Activated B cell treated with CpG ODN at 0.5 μM for 24 hours (primary cell): ENCODE measurements at regions of chr6 and their contacts with region 1.

Region 1: GRCh38 chr6:139375232-139376016 is 976 bp upstream of the CITED2 start:
- DNase-seq: peak; percentile 81
- ATAC-seq: peak; percentile 51
- H3K4me3 Mint-ChIP-seq: peak overlapping the region; percentile 99
- H3K27ac Mint-ChIP-seq: peak overlapping the region; percentile 95
- H3K4me1 Mint-ChIP-seq: peaks cover 27% of the 10 kb centered on the region
- H3K27me3 Mint-ChIP-seq: no peaks in the 10 kb centered on the region
- CTCF ChIP-seq: no peak

Region 2: GRCh38 chr6:138403801-138404661 is 971.4 kb before region 1 on chr6 and contains the start of gene HEBP2:
- CTCF ChIA-PET with region 1: no interaction called
- POLR2A ChIA-PET with region 1: interaction called, 10 read pairs
- intact Hi-C with region 1: loop called (anchors 2 kb)
- DNase-seq: peak; percentile 88
- ATAC-seq: peak; percentile 87
- H3K4me3 Mint-ChIP-seq: peak within 1 kb of the TSS; percentile 90
- H3K27ac Mint-ChIP-seq: peak within 1 kb of the TSS; percentile 89
- H3K4me1 Mint-ChIP-seq: peaks cover 20% of the 10 kb centered on the region
- H3K27me3 Mint-ChIP-seq: no peaks in the 10 kb centered on the region
- CTCF ChIP-seq: no peak
- total RNA-seq, gene HEBP2: 26.2 and 32.7 TPM in 2 replicates

Region 3: DNA sequence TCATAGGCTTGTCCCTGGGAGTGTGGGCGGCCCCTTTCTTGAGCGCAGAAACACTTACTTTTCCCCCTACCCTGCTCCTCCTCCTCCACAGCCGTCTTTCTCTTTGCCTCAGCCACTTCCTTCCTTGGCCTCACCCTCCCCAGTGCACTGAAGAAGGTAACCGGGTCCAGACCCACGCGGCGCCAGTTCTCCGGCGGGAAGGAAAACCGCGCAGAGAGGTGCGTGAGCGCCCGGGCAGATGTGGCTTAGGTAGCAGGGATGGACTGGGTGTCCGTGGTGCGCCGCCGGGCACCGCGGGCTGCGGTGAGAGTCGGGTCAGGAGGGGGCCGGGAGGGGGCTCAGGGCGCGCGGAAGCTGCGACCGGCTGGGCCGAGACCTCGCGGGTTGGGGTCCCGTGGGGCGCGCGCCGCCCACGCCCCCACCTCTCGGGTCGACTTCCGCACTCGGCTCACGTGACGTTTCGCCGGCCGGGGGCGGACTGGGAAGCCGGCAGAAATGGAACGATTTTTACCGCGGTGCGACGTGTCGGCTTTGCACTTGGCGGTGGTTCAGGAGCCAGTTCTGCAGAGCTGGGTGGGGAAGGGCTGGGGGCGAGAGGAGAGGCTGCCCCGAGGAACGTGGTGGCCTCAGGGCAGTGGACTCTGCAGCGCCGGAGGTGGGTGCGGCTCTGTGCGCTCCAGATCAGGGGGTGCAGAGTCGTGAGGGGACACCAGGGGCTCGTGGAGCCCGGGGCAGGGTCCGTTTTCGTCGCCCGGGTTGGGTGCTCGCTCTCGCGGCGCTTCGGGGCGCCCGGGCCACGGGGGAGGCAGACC is 346.6 kb before region 1 on chr6 and contains the start of gene ABRACL:
- CTCF ChIA-PET with region 1: no interaction called
- POLR2A ChIA-PET with region 1: interaction called, 42 read pairs
- intact Hi-C with region 1: loop called (anchors 1 kb)
- DNase-seq: peak; percentile 83
- ATAC-seq: peak; percentile 71
- H3K4me3 Mint-ChIP-seq: no peak within 1 kb of the TSS
- H3K27ac Mint-ChIP-seq: peak within 1 kb of the TSS; percentile 95
- H3K4me1 Mint-ChIP-seq: peaks cover 14% of the 10 kb centered on the region
- H3K27me3 Mint-ChIP-seq: no peaks in the 10 kb centered on the region
- CTCF ChIP-seq: no peak
- total RNA-seq, gene ABRACL: 63.5 and 63.8 TPM in 2 replicates

Region 4: DNA sequence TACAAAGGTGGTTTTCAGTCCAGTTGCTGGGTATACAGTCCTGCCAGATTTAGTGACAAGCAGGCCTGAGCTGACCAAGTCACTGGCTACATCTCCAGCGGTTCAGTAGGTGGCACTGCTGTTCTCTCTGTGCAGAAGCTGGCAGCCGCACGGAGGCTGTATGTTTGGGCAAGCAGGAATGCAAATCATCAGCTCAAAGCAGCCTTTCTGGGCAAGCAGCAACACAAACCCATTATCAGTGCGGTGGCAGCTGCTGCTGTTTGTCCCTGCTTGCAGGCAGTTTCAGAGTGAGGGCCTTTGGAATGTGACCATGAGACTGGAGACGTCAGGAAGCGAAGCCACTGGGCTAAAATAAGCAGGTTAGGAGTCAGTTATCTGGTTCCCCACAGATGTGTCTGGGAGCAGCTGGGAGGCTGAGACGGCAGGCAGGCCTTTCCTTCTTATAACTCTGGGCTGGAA is 156.1 kb before region 1 on chr6:
- CTCF ChIA-PET with region 1: interaction called, 40 read pairs
- POLR2A ChIA-PET with region 1: interaction called, 13 read pairs
- intact Hi-C with region 1: no loop called
- DNase-seq: peak; percentile 52
- ATAC-seq: peak; percentile 100
- H3K4me3 Mint-ChIP-seq: peak overlapping the region; percentile 24
- H3K27ac Mint-ChIP-seq: peak overlapping the region; percentile 73
- H3K4me1 Mint-ChIP-seq: peaks cover 12% of the 10 kb centered on the region
- H3K27me3 Mint-ChIP-seq: no peaks in the 10 kb centered on the region
- CTCF ChIP-seq: no peak

Region 5: GRCh38 chr6:139364302-139364981 is 11.0 kb before region 1 on chr6:
- CTCF ChIA-PET with region 1: interaction called, 23 read pairs
- POLR2A ChIA-PET with region 1: interaction called, 13 read pairs
- intact Hi-C with region 1: no loop called
- DNase-seq: no peak
- ATAC-seq: peak; percentile 67
- H3K4me3 Mint-ChIP-seq: peak overlapping the region; percentile 9
- H3K27ac Mint-ChIP-seq: no peak overlapping the region
- H3K4me1 Mint-ChIP-seq: peaks cover 20% of the 10 kb centered on the region
- H3K27me3 Mint-ChIP-seq: no peaks in the 10 kb centered on the region
- CTCF ChIP-seq: peak; percentile 67

Region 6: GRCh38 chr6:139841794-139842215 is 466.4 kb after region 1 on chr6:
- CTCF ChIA-PET with region 1: no interaction called
- POLR2A ChIA-PET with region 1: interaction called, 3 read pairs
- intact Hi-C with region 1: loop called (anchors 2 kb)
- DNase-seq: no peak
- ATAC-seq: peak; percentile 84
- H3K4me3 Mint-ChIP-seq: peak overlapping the region; percentile 60
- H3K27ac Mint-ChIP-seq: peak overlapping the region; percentile 51
- H3K4me1 Mint-ChIP-seq: peaks cover 51% of the 10 kb centered on the region
- H3K27me3 Mint-ChIP-seq: no peaks in the 10 kb centered on the region
- CTCF ChIP-seq: no peak